ENCODE measurements at regions of chr12 and their contacts with region 1.

Region 1: GRCh38 chr12:15856097-15856982 is 25.8 kb upstream of the STRAP start:
- DNase-seq: peak; percentile 43 to 67
- H3K4me3 ChIP-seq: no peak overlapping the region
- H3K4me1 ChIP-seq: peaks cover 21% of the 10 kb centered on the region
- H3K27me3 ChIP-seq: no peaks in the 10 kb centered on the region

Region 2: DNA sequence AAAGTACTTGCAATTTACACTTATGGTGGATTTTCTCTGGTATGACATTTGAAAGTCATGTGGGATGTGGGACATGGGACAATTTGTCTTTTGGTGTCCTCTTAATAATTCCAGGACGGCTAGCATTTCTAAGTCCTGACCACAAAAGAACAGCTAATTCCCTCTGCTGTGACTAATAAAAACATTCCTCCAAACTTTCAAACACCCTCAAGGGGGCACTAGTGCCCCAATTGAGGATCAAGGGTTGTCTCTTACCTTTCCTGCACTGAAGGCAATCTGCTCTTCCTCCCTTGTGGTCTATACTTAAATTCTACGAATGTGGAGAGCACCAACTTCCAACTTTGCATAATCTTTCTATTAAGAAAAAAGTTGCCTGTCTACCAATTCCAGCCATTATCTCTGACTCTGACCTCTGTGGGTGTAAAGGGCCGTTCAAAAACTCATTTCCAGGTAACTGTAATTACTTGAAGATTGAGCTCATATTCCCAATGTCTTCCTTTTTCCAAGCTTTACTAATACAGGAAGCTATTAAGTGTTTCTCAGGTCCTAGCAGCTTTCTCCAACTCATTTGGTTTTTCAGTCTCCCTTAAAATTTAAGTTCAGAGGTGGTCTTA is 323.9 kb before region 1 on chr12:
- in situ Hi-C with region 1: loop called (anchors 10 kb)
- DNase-seq: peak; percentile 46 to 49
- H3K4me3 ChIP-seq: no peak overlapping the region
- H3K4me1 ChIP-seq: no peaks in the 10 kb centered on the region
- H3K27me3 ChIP-seq: peaks cover 22% of the 10 kb centered on the region

Region 3: GRCh38 chr12:15599266-15600037 is 256.9 kb before region 1 on chr12:
- in situ Hi-C with region 1: loop called (anchors 5 kb)
- DNase-seq: no peak
- H3K4me3 ChIP-seq: no peak overlapping the region
- H3K4me1 ChIP-seq: no peaks in the 10 kb centered on the region
- H3K27me3 ChIP-seq: no peaks in the 10 kb centered on the region

Region 4: GRCh38 chr12:16281157-16281556 is 424.8 kb after region 1 on chr12:
- in situ Hi-C with region 1: no loop called
- DNase-seq: no peak
- H3K4me3 ChIP-seq: no peak overlapping the region
- H3K4me1 ChIP-seq: no peaks in the 10 kb centered on the region
- H3K27me3 ChIP-seq: no peaks in the 10 kb centered on the region

Measured in HAP-1 (cell line).